ENCODE measurements at regions of chr22 and their contacts with region 1.

Region 1: DNA sequence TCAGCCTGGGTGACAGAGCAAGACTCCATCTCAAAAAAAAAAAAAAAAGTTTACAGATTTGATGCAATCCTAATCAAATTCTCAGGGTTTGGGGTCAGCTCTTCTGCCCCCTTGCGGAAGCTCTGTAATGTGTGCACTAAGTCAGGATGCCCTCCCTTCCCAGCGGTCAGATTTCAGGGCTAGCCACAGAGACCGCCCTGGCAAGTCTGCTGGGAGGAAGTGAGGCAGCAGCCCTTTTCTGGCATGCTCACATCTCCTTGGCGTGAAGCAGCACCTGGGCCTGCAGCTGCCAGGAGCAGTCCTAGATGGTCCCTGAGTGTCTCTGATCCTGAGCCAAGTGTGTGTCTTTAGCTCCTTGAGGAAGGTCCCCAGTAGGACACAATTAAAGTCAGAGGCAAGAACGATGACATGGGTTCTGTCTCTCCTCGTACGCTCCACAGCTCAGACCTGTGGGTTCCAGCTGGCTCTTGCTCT is 10.9 kb upstream of the APOBEC3C start:
- DNase-seq: peak; percentile 40 to 69 (median 62)
- ATAC-seq: peak; percentile 95
- H3K4me3 ChIP-seq: no peak overlapping the region
- H3K4me3 Mint-ChIP-seq: no peak overlapping the region
- H3K27ac ChIP-seq: no peak overlapping the region
- H3K27ac Mint-ChIP-seq: peak overlapping the region in 4 of 9 donors; percentile 7 to 41 (median 24)
- H3K4me1 ChIP-seq: peaks cover 9 to 11% of the 10 kb centered on the region in 2 donors
- H3K4me1 Mint-ChIP-seq: peaks cover 0 to 17% (median 9%) of the 10 kb centered on the region in 7 donors
- H3K27me3 ChIP-seq: no peaks in the 10 kb centered on the region
- H3K27me3 Mint-ChIP-seq: peaks cover 0 to 15% (median 0%) of the 10 kb centered on the region in 5 donors

Region 2: DNA sequence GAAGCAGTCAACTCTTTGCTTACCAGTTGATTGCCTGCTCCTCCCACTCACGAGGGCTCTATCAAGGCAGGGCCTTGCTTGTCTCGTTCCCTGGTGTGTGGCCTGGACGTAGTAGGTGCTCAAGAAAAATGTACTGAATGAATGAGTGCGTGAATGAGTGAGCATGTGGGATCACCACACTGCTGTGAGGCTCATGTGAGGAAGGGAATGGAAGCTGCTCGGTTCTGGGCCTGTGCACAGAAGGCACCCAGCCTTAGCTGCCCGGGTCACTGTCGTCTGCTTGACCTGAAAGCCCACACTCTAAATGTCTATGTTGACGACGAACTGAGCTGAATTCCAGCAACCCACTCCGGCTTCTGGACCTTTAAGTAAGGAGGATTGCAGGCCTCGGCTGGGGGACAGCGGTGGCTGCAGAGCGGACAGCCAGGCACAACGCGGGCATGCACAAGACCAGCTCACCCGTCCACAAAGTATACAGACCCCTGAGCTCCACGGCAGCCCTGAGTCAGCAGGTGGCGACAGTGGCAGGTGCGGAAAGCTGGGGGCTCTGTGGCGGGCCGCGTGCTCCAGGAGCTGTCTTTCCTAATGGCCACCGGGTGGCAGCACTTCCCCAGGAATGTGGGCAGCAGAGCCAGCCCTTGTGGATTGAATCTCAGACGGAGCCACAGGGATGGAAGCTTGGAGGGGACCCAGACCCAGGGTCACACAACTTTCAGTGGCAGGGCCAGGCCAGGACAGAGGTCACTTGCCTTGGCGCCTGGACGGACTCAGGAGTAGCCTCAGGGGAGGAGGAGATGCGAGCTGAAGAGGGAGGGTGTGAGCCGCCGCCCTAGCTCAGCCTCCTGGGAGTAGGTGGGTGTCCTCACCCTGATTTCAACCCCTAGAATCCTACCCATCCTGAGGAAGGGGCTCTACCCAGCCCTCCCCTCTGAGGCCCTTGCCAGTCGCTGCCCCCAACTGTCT is 951.0 kb before region 1 on chr22:
- CTCF ChIA-PET with region 1: interaction called, 4 read pairs
- POLR2A ChIA-PET with region 1: no interaction called
- intact Hi-C with region 1: loop called in 1 of 2 experiments (anchors 1 kb)
- DNase-seq: peak; percentile 59 to 75 (median 69)
- ATAC-seq: peak; percentile 88
- H3K4me3 ChIP-seq: no peak overlapping the region
- H3K4me3 Mint-ChIP-seq: peak overlapping the region in 2 of 10 donors; percentile 13 to 51
- H3K27ac ChIP-seq: no peak overlapping the region
- H3K27ac Mint-ChIP-seq: peak overlapping the region in 2 of 9 donors; percentile 38 to 71
- H3K4me1 ChIP-seq: peaks cover 10 to 11% of the 10 kb centered on the region in 2 donors
- H3K4me1 Mint-ChIP-seq: peaks cover 0 to 14% (median 9%) of the 10 kb centered on the region in 7 donors
- H3K27me3 ChIP-seq: no peaks in the 10 kb centered on the region
- H3K27me3 Mint-ChIP-seq: peaks cover 0 to 28% (median 8%) of the 10 kb centered on the region in 5 donors

Region 3: DNA sequence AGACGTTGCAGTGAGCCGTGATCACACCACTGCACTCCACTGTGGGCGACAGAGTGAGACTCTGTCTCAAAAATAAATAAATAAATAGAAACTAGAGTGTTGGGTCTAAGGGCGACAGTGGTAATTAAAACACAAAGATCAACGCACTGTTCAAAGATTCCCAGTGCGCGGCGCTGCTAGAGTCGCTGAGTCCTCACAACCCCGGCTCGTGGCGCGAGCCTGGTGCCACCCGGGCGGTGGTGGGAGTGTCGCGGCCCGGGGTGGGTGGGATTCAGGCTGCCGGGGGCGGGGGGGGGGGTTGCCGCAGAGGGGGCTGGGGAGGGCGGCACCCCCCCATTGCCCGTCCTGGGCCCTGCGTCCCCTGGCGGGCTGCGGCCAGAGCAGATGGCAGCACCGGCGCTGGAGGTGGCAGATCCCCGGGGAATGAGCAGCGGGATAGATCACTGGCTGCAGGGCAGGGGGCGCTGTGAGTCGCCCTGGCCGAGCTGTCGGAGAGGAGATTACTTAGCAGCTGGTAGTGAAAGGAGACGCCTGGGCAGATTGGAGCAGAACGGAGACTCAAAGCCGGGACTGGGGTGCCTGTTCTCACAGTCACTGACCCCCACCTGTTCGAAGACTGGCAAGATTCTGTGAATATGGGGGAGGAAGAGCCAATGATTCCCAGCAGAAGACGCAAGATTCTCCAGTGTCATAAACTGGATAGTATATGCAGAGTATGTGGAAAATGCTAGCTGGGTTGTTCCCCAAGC is 76.0 kb before region 1 on chr22:
- CTCF ChIA-PET with region 1: interaction called, 3 read pairs
- POLR2A ChIA-PET with region 1: no interaction called
- intact Hi-C with region 1: loop called (anchors 1 to 5 kb)
- DNase-seq: peak in 7 of 9 donors; percentile 4 to 61 (median 12)
- ATAC-seq: peak; percentile 80
- H3K4me3 ChIP-seq: no peak overlapping the region
- H3K4me3 Mint-ChIP-seq: peak overlapping the region; percentile 18 to 79 (median 66)
- H3K27ac ChIP-seq: no peak overlapping the region
- H3K27ac Mint-ChIP-seq: no peak overlapping the region
- H3K4me1 ChIP-seq: no peaks in the 10 kb centered on the region
- H3K4me1 Mint-ChIP-seq: peaks cover 3 to 13% (median 5%) of the 10 kb centered on the region in 7 donors
- H3K27me3 ChIP-seq: no peaks in the 10 kb centered on the region
- H3K27me3 Mint-ChIP-seq: peaks cover 27 to 59% (median 34%) of the 10 kb centered on the region in 5 donors

Region 4: DNA sequence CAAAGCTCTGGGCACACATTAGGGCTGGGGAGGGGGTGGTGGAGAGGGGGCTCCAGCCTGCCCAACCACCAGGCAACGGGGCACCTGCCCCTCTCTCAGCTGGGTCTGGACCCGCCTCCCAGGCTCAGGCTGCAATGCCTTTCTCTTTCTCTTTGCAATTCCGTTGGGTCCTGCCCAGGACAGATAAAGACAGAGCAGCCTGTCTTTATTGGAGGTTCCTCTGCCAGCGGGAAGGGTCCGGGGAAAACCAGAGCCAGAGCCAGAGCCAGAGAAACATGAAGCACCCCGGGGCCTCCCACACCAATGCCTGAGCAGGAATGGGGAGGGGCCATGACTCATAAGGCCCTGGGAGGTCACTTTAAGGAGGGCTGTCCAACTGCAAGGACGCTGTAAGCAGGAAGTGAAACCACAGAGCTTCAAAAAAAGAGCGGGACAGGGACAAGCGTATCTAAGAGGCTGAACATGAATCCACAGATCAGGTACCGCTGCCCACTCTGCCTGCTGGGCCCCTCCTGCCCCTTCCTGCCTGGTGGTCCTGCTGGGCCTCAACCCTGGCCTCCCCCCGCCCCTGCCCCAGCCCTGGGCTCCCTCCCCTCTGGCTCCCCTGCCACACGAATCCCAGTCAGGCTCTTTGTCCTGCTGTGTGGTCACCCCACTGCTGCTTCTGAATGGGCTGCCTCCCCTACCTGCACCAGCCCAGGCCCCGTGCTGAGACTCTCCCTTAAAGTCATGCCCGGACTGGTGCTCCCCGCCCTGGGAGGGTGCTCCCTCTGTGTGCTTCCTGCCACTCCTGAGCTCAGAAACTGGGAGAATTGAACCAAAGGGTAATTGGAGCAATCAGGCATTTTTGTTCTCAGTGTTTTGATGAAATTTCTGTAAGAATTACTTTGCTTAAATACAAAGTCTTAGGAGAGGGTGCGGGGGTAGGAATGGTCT is 20.9 kb before region 1 on chr22 and contains the start of gene APOBEC3B:
- CTCF ChIA-PET with region 1: interaction called, 5 read pairs
- POLR2A ChIA-PET with region 1: interaction called, 4 read pairs
- intact Hi-C with region 1: loop called (anchors 1 kb)
- DNase-seq: peak in 7 of 9 donors; percentile 15 to 79 (median 28)
- ATAC-seq: peak; percentile 90
- H3K4me3 ChIP-seq: peak within 1 kb of the TSS; percentile 46
- H3K4me3 Mint-ChIP-seq: peak within 1 kb of the TSS; percentile 75 to 90 (median 86)
- H3K27ac ChIP-seq: no peak within 1 kb of the TSS
- H3K27ac Mint-ChIP-seq: peak within 1 kb of the TSS in 5 of 9 donors; percentile 12 to 98 (median 74)
- H3K4me1 ChIP-seq: peaks cover 0 to 8% of the 10 kb centered on the region in 2 donors
- H3K4me1 Mint-ChIP-seq: peaks cover 10 to 47% (median 12%) of the 10 kb centered on the region in 7 donors
- H3K27me3 ChIP-seq: no peaks in the 10 kb centered on the region
- H3K27me3 Mint-ChIP-seq: peaks cover 0 to 3% (median 0%) of the 10 kb centered on the region in 5 donors
- total RNA-seq, gene APOBEC3B: 0.30 to 16.0 (median 7.1) TPM in 4 of 5 experiments, not detected in the other

Region 5: GRCh38 chr22:39122786-39123475 is 119.7 kb after region 1 on chr22:
- CTCF ChIA-PET with region 1: interaction called, 16 read pairs
- POLR2A ChIA-PET with region 1: no interaction called
- intact Hi-C with region 1: loop called (anchors 1 kb)
- DNase-seq: no peak
- ATAC-seq: no peak
- H3K4me3 ChIP-seq: no peak overlapping the region
- H3K4me3 Mint-ChIP-seq: no peak overlapping the region
- H3K27ac ChIP-seq: no peak overlapping the region
- H3K27ac Mint-ChIP-seq: no peak overlapping the region
- H3K4me1 ChIP-seq: peaks cover 2 to 8% of the 10 kb centered on the region in 2 donors
- H3K4me1 Mint-ChIP-seq: peaks cover 2 to 15% (median 9%) of the 10 kb centered on the region in 7 donors
- H3K27me3 ChIP-seq: no peaks in the 10 kb centered on the region
- H3K27me3 Mint-ChIP-seq: no peaks in the 10 kb centered on the region